Activated naive CD4-positive, alpha-beta T cell treated with anti-CD3 and anti-CD28 coated beads, Interleukin-2, amount 10 ng/mL, durations not matched to agents 7 days and 5 days (primary cell): ENCODE measurements at regions of chr17 and their contacts with region 1.

Region 1: DNA sequence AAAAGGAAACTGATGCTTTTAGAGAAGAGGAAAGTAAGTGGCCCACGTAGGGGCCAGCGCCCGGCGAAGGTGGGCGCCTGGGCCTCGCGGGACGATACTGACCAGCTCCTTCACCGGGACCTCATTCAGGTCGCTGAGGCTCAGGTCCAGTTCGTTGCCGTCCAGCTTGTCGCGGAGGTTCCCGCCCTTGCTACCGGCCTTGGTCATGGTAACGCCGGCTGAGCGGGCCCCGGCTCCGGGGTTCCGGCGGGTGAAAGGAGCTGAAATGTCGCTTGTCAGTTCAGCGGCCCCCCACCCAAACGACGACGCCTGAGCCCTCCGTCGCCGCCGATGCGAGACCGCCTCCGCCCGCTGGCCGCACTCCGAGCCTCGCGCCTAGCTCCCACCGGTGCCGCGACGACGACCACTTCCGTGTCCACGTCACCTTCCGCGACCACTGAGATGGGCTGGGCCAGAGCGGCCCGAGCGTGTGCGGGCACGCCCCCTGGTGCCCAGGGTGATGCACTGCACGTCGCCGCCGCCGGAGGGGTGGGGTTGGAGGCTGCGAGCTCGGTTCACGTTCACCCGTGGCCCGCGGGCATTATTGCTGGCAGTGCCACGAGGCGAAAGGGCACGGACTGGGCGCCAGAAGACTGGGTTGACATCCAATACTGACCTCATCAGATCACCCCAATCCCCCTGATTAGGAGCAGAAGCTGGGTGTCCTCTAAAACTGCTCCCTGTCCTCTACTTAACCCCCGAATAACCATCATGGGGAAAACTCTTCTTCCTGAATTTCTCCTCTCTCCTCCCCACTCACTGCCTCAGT is at the start of gene LRRC59:
- DNase-seq: peak; percentile 94
- H3K4me3 Mint-ChIP-seq: peak within 1 kb of the TSS; percentile 93
- H3K27ac Mint-ChIP-seq: peak within 1 kb of the TSS; percentile 94
- H3K4me1 Mint-ChIP-seq: peaks cover 32% of the 10 kb centered on the region
- H3K27me3 Mint-ChIP-seq: no peaks in the 10 kb centered on the region

Region 2: DNA sequence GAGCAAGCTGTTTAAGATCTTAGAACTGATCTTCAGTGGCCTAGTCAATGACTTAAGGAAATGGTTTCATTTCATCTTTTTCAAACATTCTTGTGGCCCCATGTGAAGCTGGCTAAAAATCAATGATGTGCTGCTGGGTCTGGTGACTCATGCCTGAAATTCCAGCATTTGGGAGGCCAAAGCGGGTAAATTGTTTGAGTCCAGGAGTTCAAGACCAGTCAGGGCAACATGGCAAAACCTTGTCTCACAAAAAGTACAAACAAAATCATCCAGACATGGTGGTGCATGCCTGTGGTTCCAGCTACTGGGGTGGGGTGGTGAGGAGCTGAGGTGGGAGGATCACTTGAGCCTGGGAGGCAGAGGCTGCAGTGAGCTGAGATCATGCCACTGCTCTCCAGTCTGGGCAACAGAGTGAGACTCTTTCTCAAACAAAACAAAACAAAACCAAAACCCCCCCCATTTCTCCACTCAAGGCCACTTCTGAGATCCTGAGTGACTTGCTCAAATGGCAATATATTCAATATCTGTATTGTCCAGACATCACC is 178.5 kb before region 1 on chr17:
- CTCF ChIA-PET with region 1: no interaction called
- DNase-seq: no peak
- H3K4me3 Mint-ChIP-seq: no peak overlapping the region
- H3K27ac Mint-ChIP-seq: peak overlapping the region; percentile 11
- H3K4me1 Mint-ChIP-seq: peaks cover 17% of the 10 kb centered on the region
- H3K27me3 Mint-ChIP-seq: peaks cover 46% of the 10 kb centered on the region

Region 3: GRCh38 chr17:50361561-50362480 is 35.5 kb before region 1 on chr17:
- CTCF ChIA-PET with region 1: interaction called, 32 read pairs
- DNase-seq: peak; percentile 72
- H3K4me3 Mint-ChIP-seq: no peak overlapping the region
- H3K27ac Mint-ChIP-seq: peak overlapping the region; percentile 55
- H3K4me1 Mint-ChIP-seq: peaks cover 7% of the 10 kb centered on the region
- H3K27me3 Mint-ChIP-seq: no peaks in the 10 kb centered on the region

Region 4: GRCh38 chr17:50372758-50373556 is 24.4 kb before region 1 on chr17 and contains the starts of genes EME1 and MRPL27:
- CTCF ChIA-PET with region 1: interaction called, 10 read pairs
- DNase-seq: peak; percentile 91
- H3K4me3 Mint-ChIP-seq: peak within 1 kb of the TSS; percentile 90
- H3K27ac Mint-ChIP-seq: peak within 1 kb of the TSS; percentile 95
- H3K4me1 Mint-ChIP-seq: peaks cover 39% of the 10 kb centered on the region
- H3K27me3 Mint-ChIP-seq: no peaks in the 10 kb centered on the region

Region 5: DNA sequence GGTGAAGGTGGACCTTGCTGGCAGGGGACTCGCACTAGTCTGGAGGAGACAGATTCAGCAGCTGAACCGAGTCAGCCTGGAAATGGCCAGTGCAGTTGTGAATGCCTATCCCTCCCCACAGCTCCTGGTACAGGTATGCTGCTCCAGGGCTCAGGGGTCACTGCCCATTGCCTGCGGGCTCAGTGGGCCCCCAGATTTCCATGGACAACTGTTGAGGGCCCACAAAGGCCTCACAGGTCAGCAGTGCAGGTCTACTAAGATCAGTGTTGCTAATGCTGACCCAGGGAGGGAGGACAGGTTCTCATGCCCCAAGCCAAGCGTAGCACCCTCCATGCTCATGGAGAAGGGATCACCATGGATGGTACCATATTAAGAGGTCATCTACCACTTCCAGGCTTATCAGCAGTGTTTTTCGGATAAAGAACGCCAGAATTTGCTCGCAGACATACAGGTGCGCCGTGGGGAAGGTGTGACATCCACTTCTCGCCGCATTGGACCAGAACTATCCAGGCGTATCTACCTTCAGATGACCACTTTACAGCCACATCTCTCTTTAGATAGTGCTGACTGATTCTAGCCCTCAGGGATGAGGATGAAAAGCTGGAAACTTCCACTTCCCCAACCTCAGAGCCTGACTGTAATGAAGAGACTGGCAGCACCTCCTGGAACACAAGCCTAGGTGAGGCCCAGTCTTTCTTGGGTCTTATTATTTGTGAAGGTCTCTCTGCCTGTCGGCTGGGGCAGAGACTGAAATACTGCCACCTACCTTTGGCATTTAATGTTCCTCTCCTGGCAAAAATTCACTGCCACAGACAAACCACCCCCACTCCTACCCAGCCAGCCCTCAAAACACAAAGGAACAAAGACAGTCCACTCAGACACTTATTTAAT is 16.7 kb before region 1 on chr17:
- CTCF ChIA-PET with region 1: interaction called, 12 read pairs
- DNase-seq: no peak
- H3K4me3 Mint-ChIP-seq: no peak overlapping the region
- H3K27ac Mint-ChIP-seq: peak overlapping the region; percentile 11
- H3K4me1 Mint-ChIP-seq: no peaks in the 10 kb centered on the region
- H3K27me3 Mint-ChIP-seq: no peaks in the 10 kb centered on the region

Region 6: GRCh38 chr17:50425682-50426471 is 28.6 kb after region 1 on chr17 and contains the start of gene ACSF2:
- CTCF ChIA-PET with region 1: interaction called, 14 read pairs
- DNase-seq: peak; percentile 85
- H3K4me3 Mint-ChIP-seq: peak within 1 kb of the TSS; percentile 78
- H3K27ac Mint-ChIP-seq: peak within 1 kb of the TSS; percentile 82
- H3K4me1 Mint-ChIP-seq: peaks cover 38% of the 10 kb centered on the region
- H3K27me3 Mint-ChIP-seq: no peaks in the 10 kb centered on the region

Region 7: DNA sequence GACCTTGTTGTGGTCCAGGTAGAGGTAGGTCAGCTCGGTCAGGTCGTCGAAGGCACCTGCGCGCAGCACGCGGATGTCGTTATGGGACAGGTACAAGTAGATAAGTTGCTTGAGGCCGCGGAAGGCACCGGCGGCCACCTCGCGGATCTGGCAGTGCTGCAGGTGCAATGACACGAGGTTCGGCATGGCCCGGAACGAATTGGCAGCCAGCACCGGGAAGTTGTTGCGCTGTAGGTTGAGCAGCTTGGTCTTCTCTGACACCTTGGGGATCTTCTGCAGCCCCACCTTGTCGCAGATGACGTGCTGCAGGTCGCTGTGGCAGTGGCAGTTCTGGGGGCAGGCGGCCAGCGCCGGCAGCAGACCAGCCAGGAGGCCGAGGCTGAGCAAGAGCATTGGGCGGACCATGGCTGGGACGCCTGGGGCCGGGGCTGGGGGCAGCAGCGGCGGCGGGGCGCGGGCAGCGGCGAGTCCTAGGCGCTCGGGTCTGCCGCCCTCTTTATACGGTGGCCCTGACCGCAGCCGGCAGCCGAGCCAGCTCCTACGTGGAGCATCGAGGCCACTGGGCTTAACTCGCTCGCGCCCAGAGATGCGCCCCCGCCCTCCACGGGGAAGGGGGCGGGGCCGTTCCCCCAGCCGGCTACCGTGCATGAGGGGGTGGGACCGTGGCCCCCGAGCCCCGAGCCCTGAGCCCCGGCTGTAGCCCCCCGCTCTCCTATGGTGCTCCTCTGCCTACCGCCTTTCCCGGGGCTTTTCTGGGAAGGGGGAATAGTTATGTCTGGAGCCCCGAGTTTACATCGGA is 71.3 kb after region 1 on chr17 and contains the start of gene CHAD:
- CTCF ChIA-PET with region 1: no interaction called
- DNase-seq: peak; percentile 25
- H3K4me3 Mint-ChIP-seq: no peak within 1 kb of the TSS
- H3K27ac Mint-ChIP-seq: no peak within 1 kb of the TSS
- H3K4me1 Mint-ChIP-seq: peaks cover 8% of the 10 kb centered on the region
- H3K27me3 Mint-ChIP-seq: peaks cover 70% of the 10 kb centered on the region

Region 8: DNA sequence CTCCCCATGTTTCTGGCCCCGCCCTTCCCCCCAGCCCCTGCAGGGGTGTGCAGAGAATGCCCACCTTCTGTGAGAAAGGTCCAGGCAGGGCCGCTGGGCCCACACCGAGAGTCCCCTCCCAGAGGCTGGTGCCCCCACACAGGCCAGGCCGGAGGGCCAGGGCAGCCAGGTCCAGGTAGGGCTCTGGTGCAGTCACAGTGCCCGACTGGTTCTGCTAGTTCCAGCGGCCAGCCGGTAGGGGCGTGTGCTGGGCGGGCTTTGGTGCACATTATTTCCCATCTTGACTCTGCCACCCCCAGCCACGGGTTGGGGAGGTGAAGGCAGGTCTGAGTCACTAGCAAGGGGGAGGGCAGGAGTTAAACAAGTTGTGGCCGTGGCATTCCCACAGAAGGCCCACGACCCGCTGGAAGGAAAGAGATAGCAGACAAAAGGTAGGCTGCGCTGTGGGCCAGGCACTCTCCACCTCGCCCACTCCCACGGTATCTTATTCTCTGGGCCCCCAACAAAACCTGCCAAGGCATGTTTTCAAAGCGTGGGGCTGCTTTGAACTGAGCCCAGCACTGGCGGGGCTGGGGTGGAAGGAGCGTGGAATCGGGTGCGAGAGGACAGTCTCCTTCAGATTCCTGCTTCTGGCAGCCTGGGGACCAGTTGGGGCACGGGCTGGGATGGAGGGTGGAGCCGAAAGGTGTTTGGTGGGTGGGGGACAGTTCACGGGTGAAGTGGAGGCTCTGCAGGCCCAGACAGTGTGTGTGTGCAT is 137.1 kb after region 1 on chr17:
- CTCF ChIA-PET with region 1: no interaction called
- DNase-seq: no peak
- H3K4me3 Mint-ChIP-seq: no peak overlapping the region
- H3K27ac Mint-ChIP-seq: no peak overlapping the region
- H3K4me1 Mint-ChIP-seq: peaks cover 10% of the 10 kb centered on the region
- H3K27me3 Mint-ChIP-seq: peaks cover 76% of the 10 kb centered on the region